CD8-positive, alpha-beta T cell (primary cell): ENCODE measurements at regions of chr6 and their contacts with region 1.

Region 1: DNA sequence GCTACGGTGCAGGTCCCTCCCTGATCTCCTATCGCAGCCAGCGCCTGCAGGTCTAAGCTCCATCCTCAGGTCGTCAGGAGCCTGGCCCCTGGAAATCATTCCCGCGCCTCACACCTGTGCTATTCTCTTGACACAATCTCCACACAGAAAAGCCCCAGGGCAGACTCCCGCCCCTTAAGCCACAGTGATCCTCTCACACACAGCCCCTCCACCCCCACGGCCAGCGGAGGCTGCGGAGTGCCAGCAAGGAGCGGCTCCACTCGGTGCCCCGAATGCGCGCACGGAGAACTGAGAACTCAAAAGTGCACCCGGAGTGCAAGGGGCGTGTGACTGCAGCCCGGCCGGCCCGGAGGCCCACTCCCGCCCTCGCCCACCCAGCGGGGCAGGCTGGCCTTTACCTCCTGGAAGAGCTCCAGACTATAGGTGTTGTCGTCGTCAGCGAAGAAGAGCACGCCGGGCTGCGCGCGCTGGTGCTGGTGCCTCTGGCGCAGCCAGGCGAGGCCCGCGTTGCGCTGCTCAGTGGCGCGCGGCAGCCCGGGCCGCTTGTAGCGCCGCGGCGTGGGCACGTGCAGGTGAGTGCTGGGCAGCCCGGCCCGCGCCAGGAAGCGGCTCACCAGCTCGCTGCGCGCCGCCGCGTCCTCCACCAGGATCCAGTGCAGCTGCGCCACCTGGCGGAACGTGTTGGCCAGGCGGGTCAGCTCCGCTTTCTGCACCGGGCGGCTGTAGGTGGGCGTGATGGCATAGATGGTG is 1.2 kb downstream of the B3GAT2 start:
- DNase-seq: peak; percentile 64 to 90 (median 85)
- ATAC-seq: peak; percentile 91
- H3K4me3 ChIP-seq: peak overlapping the region; percentile 41 to 72
- H3K4me3 Mint-ChIP-seq: peak overlapping the region; percentile 81
- H3K27ac ChIP-seq: no peak overlapping the region
- H3K27ac Mint-ChIP-seq: no peak overlapping the region
- H3K4me1 ChIP-seq: peaks cover 17% of the 10 kb centered on the region
- H3K4me1 Mint-ChIP-seq: peaks cover 22% of the 10 kb centered on the region
- H3K27me3 ChIP-seq: peaks cover 6 to 11% of the 10 kb centered on the region in 2 experiments
- H3K27me3 Mint-ChIP-seq: peaks cover 55% of the 10 kb centered on the region
- CTCF ChIP-seq: peak; percentile 89

Region 2: GRCh38 chr6:70221025-70221714 is 734.4 kb before region 1 on chr6:
- CTCF ChIA-PET with region 1: interaction called, 5 read pairs
- POLR2A ChIA-PET with region 1: no interaction called
- intact Hi-C with region 1: loop called (anchors 5 kb)
- DNase-seq: peak in 2 of 9 experiments; percentile 17 to 32
- ATAC-seq: peak; percentile 49
- H3K4me3 ChIP-seq: no peak overlapping the region
- H3K4me3 Mint-ChIP-seq: no peak overlapping the region
- H3K27ac ChIP-seq: no peak overlapping the region
- H3K27ac Mint-ChIP-seq: no peak overlapping the region
- H3K4me1 ChIP-seq: no peaks in the 10 kb centered on the region
- H3K4me1 Mint-ChIP-seq: no peaks in the 10 kb centered on the region
- H3K27me3 ChIP-seq: no peaks in the 10 kb centered on the region
- H3K27me3 Mint-ChIP-seq: peaks cover 18% of the 10 kb centered on the region
- CTCF ChIP-seq: peak; percentile 88

Region 3: GRCh38 chr6:70310063-70310694 is 645.4 kb before region 1 on chr6:
- CTCF ChIA-PET with region 1: interaction called, 5 read pairs
- POLR2A ChIA-PET with region 1: no interaction called
- intact Hi-C with region 1: loop called (anchors 5 kb)
- DNase-seq: peak in 2 of 9 experiments; percentile 28 to 44
- ATAC-seq: no peak
- H3K4me3 ChIP-seq: no peak overlapping the region
- H3K4me3 Mint-ChIP-seq: no peak overlapping the region
- H3K27ac ChIP-seq: no peak overlapping the region
- H3K27ac Mint-ChIP-seq: no peak overlapping the region
- H3K4me1 ChIP-seq: no peaks in the 10 kb centered on the region
- H3K4me1 Mint-ChIP-seq: no peaks in the 10 kb centered on the region
- H3K27me3 ChIP-seq: no peaks in the 10 kb centered on the region
- H3K27me3 Mint-ChIP-seq: peaks cover 8% of the 10 kb centered on the region
- CTCF ChIP-seq: peak; percentile 49

Region 4: DNA sequence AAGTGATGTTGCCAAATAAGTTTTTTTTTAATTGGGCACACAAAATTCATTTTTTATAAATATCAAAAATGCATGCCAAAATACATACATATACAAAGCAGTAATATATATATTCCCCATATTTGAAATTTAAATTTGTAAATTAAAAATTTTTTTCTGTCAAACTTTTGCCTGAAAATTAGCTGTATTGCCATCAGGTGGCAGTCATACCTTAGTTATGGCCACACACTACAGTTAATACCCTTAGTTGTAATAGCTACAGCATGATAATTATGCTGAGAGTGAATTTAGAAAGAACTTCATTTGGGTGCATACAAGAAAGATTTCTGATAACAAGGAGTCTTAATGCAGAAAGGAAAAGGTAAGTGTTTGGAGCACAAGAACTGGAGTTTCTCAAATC is 435.0 kb before region 1 on chr6:
- CTCF ChIA-PET with region 1: no interaction called
- POLR2A ChIA-PET with region 1: no interaction called
- intact Hi-C with region 1: loop called (anchors 1 to 2 kb)
- DNase-seq: peak in 2 of 9 experiments; percentile 36 to 46
- ATAC-seq: no peak
- H3K4me3 ChIP-seq: no peak overlapping the region
- H3K4me3 Mint-ChIP-seq: no peak overlapping the region
- H3K27ac ChIP-seq: no peak overlapping the region
- H3K27ac Mint-ChIP-seq: no peak overlapping the region
- H3K4me1 ChIP-seq: no peaks in the 10 kb centered on the region
- H3K4me1 Mint-ChIP-seq: peaks cover 7% of the 10 kb centered on the region
- H3K27me3 ChIP-seq: no peaks in the 10 kb centered on the region
- H3K27me3 Mint-ChIP-seq: no peaks in the 10 kb centered on the region
- CTCF ChIP-seq: peak; percentile 38

Region 5: GRCh38 chr6:70706491-70707123 is 249.0 kb before region 1 on chr6:
- CTCF ChIA-PET with region 1: interaction called, 30 read pairs
- POLR2A ChIA-PET with region 1: interaction called, 3 read pairs
- intact Hi-C with region 1: loop called (anchors 1 to 2 kb)
- DNase-seq: peak in 3 of 9 experiments; percentile 20 to 67 (median 58)
- ATAC-seq: no peak
- H3K4me3 ChIP-seq: no peak overlapping the region
- H3K4me3 Mint-ChIP-seq: no peak overlapping the region
- H3K27ac ChIP-seq: no peak overlapping the region
- H3K27ac Mint-ChIP-seq: no peak overlapping the region
- H3K4me1 ChIP-seq: peaks cover 5% of the 10 kb centered on the region
- H3K4me1 Mint-ChIP-seq: peaks cover 41% of the 10 kb centered on the region
- H3K27me3 ChIP-seq: no peaks in the 10 kb centered on the region
- H3K27me3 Mint-ChIP-seq: no peaks in the 10 kb centered on the region
- CTCF ChIP-seq: peak; percentile 90